ENCODE measurements at regions of chr6 and their contacts with region 1.

Region 1: GRCh38 chr6:111057074-111057752 is 30.1 kb upstream of the SLC16A10 start:
- DNase-seq: peak; percentile 42
- ATAC-seq: peak; percentile 45
- H3K4me3 ChIP-seq: no peak overlapping the region
- H3K4me3 Mint-ChIP-seq: no peak overlapping the region
- H3K27ac ChIP-seq: no peak overlapping the region
- H3K27ac Mint-ChIP-seq: no peak overlapping the region
- H3K4me1 ChIP-seq: no peaks in the 10 kb centered on the region
- H3K4me1 Mint-ChIP-seq: no peaks in the 10 kb centered on the region
- H3K27me3 ChIP-seq: no peaks in the 10 kb centered on the region
- H3K27me3 Mint-ChIP-seq: peaks cover 10% of the 10 kb centered on the region
- CTCF ChIP-seq: peak; percentile 75

Region 2: DNA sequence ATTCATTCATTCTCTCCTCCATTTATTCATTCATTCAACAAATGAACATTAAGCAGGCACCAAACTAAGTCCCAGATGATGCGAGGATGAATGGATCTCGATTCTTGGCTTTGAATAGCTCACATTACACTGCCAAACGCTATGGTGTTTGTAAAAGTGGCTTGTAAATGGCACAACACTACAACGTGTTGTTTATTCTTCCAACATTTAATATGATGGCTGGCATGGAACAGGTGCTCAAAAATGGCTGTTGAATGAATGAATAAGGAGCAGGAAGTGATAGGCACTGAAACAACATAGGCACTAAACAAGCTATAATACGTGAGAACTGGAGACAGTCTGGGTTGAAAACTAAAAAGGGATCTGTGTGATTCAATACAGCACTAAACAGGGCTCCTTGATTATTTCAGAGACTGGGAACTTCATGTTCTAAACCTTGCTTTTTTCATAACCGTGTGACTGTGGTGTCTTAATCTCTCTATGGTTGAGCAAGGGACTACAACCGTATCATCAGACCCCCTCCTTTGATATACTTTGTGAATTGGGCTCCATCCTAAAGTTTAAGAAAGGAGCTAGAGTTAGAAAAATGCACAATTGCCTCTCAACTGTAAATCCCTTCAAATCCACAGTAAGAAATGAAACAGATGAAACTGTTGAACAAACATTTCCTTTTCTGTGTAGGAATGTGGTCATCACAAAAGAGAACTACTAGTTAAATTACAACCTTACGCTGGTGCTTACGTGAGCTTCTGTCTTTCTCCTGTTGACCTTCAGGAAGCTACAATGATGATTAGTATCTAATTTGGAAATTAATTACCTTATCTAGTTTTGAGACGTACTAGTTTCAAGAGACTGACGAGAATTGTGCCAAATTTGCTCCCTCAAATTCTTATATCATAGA is 13.1 kb after region 1 on chr6:
- CTCF ChIA-PET with region 1: interaction called, 17 read pairs
- POLR2A ChIA-PET with region 1: no interaction called
- intact Hi-C with region 1: no loop called
- DNase-seq: no peak
- ATAC-seq: no peak
- H3K4me3 ChIP-seq: no peak overlapping the region
- H3K4me3 Mint-ChIP-seq: no peak overlapping the region
- H3K27ac ChIP-seq: no peak overlapping the region
- H3K27ac Mint-ChIP-seq: no peak overlapping the region
- H3K4me1 ChIP-seq: no peaks in the 10 kb centered on the region
- H3K4me1 Mint-ChIP-seq: no peaks in the 10 kb centered on the region
- H3K27me3 ChIP-seq: peaks cover 0 to 7% (median 3%) of the 10 kb centered on the region in 4 experiments
- H3K27me3 Mint-ChIP-seq: peaks cover 46% of the 10 kb centered on the region
- CTCF ChIP-seq: no peak

Region 3: DNA sequence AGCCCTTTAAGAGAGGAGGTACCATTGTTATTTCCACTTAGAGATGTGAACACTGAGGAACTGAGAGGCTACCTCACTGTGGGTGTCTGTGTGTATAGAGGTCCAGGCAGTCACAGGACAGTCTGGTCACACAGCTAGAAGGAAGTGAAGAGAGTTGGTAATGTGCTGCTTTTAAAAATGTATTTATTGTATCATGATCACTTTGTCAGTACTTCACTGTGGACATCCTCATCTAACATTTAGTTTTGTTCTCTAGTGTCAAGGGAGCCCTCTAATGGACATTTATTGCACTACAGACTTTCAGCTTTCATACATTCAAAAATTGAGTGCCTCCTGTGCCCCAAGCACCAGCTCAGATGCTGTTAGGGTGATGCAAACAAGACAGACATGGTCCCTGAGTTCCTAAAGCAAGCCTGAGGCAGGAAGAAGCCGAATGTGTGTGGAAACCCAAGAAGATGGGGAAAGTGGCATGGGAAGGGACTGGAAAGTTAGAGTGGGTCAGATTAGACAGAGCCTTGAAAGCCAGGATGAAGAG is 153.0 kb after region 1 on chr6:
- CTCF ChIA-PET with region 1: interaction called, 16 read pairs
- POLR2A ChIA-PET with region 1: no interaction called
- intact Hi-C with region 1: no loop called
- DNase-seq: peak; percentile 69
- ATAC-seq: peak; percentile 53
- H3K4me3 ChIP-seq: no peak overlapping the region
- H3K4me3 Mint-ChIP-seq: no peak overlapping the region
- H3K27ac ChIP-seq: no peak overlapping the region
- H3K27ac Mint-ChIP-seq: no peak overlapping the region
- H3K4me1 ChIP-seq: no peaks in the 10 kb centered on the region
- H3K4me1 Mint-ChIP-seq: no peaks in the 10 kb centered on the region
- H3K27me3 ChIP-seq: no peaks in the 10 kb centered on the region
- H3K27me3 Mint-ChIP-seq: no peaks in the 10 kb centered on the region
- CTCF ChIP-seq: peak; percentile 84